ENCODE measurements at regions of chr1 and their contacts with region 1.

Region 1: GRCh38 chr1:47725992-47726855 is 271.0 kb downstream of the TRABD2B start:
- DNase-seq: peak; percentile 26
- H3K4me3 ChIP-seq: peak overlapping the region; percentile 25; the same call in 1 of the 2 replicates
- H3K27ac ChIP-seq: no peak overlapping the region
- H3K27me3 ChIP-seq: peaks cover 24% of the 10 kb centered on the region
- CTCF ChIP-seq: peak; percentile 89

Region 2: GRCh38 chr1:47192458-47193384 is 533.5 kb before region 1 on chr1:
- CTCF ChIA-PET with region 1: interaction called, 22 read pairs
- POLR2A ChIA-PET with region 1: no interaction called
- DNase-seq: peak; percentile 32
- H3K4me3 ChIP-seq: no peak overlapping the region
- H3K27ac ChIP-seq: no peak overlapping the region
- H3K27me3 ChIP-seq: peaks cover 7% of the 10 kb centered on the region
- CTCF ChIP-seq: peak; percentile 96

Region 3: GRCh38 chr1:47399138-47399845 is 326.9 kb before region 1 on chr1:
- CTCF ChIA-PET with region 1: interaction called, 11 read pairs
- POLR2A ChIA-PET with region 1: no interaction called
- DNase-seq: no peak
- H3K4me3 ChIP-seq: no peak overlapping the region
- H3K27ac ChIP-seq: no peak overlapping the region
- H3K27me3 ChIP-seq: peaks cover 4% of the 10 kb centered on the region
- CTCF ChIP-seq: no peak

Region 4: GRCh38 chr1:47449822-47450552 is 276.2 kb before region 1 on chr1:
- CTCF ChIA-PET with region 1: interaction called, 15 read pairs
- POLR2A ChIA-PET with region 1: no interaction called
- DNase-seq: no peak
- H3K4me3 ChIP-seq: no peak overlapping the region
- H3K27ac ChIP-seq: no peak overlapping the region
- H3K27me3 ChIP-seq: peaks cover 64% of the 10 kb centered on the region
- CTCF ChIP-seq: peak; percentile 45

Region 5: DNA sequence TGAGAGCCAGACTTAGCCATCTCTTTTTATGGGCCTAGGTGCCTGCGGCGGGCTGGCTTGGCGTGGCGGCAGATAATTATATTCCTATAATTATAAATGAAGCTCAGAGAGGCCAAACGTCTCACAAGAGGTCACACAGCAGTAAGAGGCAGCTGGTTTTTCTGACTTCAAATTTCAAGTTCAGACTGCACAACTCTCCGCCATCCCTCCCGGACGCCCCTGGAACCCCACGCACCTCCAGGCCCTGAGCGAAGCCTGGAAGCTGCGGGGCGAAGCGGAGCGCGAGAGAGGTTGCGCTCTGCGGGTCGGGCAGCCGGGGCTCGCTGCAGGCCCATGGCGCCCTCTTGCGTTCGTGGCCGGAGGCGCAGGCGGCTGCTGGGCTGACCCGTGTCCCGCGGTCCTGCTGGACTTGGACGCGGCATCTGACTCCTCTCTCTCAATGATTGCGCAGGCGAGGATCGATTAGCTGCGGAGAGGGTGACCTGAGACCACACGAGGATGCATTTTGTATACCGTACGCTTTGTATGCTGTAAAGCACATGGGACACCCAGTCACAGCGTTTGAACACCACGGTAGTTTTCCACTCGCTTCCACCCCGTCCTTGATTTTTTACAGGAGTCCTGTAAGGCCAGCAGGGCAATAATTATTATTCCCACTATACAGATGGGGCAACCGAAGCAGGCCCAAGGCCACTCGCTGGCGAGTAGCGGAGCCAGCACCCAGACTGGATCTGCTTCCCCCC is 15.7 kb before region 1 on chr1:
- CTCF ChIA-PET with region 1: interaction called, 71 read pairs
- POLR2A ChIA-PET with region 1: no interaction called
- DNase-seq: no peak
- H3K4me3 ChIP-seq: no peak overlapping the region
- H3K27ac ChIP-seq: no peak overlapping the region
- H3K27me3 ChIP-seq: peaks cover 64% of the 10 kb centered on the region
- CTCF ChIP-seq: peak; percentile 94